ENCODE measurements at regions of chr1 and their contacts with region 1.

Region 1: DNA sequence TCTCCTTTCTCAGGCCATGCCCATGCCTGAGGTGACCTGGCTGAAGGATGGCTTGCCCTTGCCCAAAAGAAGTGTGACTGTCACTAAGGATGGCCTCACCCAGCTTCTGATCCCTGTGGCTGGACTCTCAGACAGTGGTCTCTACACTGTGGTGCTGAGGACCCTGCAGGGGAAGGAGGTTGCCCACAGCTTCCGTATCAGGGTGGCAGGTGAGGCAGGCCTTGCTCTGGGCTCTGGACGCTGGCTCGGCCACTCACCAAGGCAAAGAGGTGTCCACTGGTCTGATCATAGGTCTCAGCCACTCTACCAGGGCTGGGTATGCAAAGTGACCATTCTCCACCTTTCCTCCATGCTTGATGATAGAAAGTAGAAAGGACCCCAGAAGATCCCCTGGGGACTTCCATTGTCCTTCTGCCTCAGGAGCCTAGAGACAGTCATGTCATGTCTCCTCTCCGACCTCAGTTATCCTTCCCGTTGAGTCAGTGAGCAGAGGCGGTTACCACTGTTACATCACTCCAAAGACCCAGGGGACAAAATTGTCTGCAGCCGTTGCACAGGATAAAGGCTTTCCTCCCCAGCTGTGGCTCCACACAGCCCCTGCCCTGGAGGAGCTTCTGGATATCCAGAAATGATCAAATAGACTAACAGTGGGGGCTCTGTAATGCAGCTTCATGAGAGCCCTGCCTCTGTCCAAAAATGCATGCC is 34.2 kb downstream of the IGFN1 start:
- DNase-seq: no peak
- ATAC-seq: no peak
- H3K4me3 ChIP-seq: no peak overlapping the region
- H3K27ac ChIP-seq: no peak overlapping the region
- H3K4me1 ChIP-seq: peaks cover 30% of the 10 kb centered on the region
- H3K27me3 ChIP-seq: peaks cover 10 to 42% of the 10 kb centered on the region in 2 experiments
- CTCF ChIP-seq: no peak
- EP300 ChIP-seq: no peak
- POLR2A ChIP-seq: no peak
- RAD21 ChIP-seq: no peak

Region 2: DNA sequence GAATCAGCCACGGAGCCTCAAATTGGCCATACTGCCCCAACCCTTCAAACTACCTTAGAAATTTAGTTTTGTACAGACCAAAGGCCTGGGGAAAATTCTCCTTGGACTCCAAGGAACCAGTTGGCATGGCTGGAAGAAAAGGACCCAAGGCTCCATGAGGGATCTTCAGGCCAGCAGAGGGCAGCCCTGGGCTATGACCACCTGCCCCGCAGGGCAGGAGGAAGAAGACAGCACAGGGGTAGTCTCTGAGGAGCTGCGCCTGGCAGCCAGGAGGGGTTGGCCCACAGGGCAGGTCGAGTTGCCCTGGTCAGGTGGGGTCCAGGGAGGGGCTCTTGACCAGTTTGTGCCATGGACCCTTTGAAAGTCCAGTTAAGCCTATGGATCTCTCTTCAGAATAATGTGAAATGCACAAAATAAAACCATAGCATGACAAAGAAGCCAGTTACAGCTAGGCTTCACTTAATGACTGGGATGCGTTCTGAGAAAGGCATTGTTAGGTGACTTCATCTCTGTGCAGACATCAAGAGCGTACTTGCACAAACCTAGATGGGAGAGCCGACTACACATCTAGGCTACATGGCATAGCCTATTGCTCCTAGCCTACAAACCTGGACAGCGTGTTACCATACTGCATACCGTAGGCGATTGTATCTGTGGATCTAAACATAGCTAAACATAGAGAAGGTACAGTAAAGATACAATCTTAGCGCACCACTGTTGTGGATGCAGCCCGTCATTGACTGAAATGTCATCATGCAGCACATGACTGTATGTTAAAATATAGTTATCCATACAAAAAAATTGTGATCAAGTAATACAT is 138.7 kb before region 1 on chr1:
- CTCF ChIA-PET with region 1: interaction called, 5 read pairs
- POLR2A ChIA-PET with region 1: no interaction called
- in situ Hi-C with region 1: no loop called
- intact Hi-C with region 1: loop called (anchors 2 kb)
- DNase-seq: peak; percentile 36
- ATAC-seq: peak; percentile 97
- H3K4me3 ChIP-seq: no peak overlapping the region
- H3K27ac ChIP-seq: no peak overlapping the region
- H3K4me1 ChIP-seq: no peaks in the 10 kb centered on the region
- H3K27me3 ChIP-seq: peaks cover 5 to 31% of the 10 kb centered on the region in 2 experiments
- CTCF ChIP-seq: peak; percentile 74
- EP300 ChIP-seq: no peak
- POLR2A ChIP-seq: no peak
- RAD21 ChIP-seq: peak; percentile 49; the same call in 1 of the 2 replicates

Region 3: DNA sequence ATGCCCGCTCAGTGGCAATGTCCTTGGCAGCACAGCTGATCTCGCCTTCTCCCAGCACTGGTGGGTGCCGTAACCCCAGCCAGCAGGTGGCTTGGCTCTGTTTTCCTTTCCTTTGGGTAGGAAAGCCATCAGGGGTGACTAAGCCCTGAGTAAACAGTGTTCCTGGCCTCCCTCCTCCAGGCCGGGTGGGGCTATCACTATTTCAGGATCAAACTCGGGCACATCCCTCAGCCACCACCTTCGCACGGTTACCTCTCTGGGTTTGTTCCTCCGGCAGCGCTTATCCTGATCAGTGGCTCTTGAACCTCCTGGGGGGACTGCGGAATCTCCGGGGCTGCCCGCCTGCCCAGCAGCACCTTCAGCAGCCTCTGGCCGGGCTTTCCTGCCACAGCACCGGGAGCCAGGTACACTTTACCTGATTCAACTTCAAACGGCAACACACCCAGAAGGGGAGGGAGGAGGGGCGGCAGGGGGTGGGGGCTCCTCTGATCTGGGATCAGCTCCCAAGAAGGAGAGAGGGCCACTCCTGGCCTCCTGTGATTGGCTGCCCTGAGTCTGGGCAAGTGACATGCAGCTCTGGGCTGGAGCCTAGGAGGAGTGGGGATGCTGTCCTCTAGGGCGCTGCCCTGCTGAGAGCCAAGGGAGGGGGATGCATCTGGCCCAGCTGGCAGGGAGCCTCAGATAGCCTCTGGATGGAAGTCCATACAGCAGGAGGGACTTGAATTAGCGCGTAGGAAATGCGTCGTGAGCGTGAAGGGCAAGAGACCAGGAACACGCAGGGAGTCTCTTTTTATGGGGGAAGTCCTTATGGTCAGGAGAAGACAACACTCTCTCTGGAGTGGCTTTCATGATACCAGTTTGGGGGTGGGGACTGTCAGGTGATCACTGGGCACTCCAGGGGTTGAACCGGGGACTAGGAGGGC is 97.7 kb before region 1 on chr1 and contains the start of gene ASCL5:
- CTCF ChIA-PET with region 1: no interaction called
- POLR2A ChIA-PET with region 1: no interaction called
- in situ Hi-C with region 1: no loop called
- intact Hi-C with region 1: loop called (anchors 5 kb)
- DNase-seq: peak; percentile 72
- ATAC-seq: peak; percentile 91
- H3K4me3 ChIP-seq: peak within 1 kb of the TSS in 1 of 3 experiments; percentile 32; a peak in 1 of 6 replicates
- H3K27ac ChIP-seq: no peak within 1 kb of the TSS
- H3K4me1 ChIP-seq: peaks cover 11% of the 10 kb centered on the region
- H3K27me3 ChIP-seq: peaks cover 10 to 52% of the 10 kb centered on the region in 2 experiments
- CTCF ChIP-seq: peak; percentile 72
- EP300 ChIP-seq: no peak
- POLR2A ChIP-seq: no peak
- RAD21 ChIP-seq: peak; percentile 31; the same call in 1 of the 2 replicates
- total RNA-seq, gene ASCL5: not detected in 2 replicates

Region 4: DNA sequence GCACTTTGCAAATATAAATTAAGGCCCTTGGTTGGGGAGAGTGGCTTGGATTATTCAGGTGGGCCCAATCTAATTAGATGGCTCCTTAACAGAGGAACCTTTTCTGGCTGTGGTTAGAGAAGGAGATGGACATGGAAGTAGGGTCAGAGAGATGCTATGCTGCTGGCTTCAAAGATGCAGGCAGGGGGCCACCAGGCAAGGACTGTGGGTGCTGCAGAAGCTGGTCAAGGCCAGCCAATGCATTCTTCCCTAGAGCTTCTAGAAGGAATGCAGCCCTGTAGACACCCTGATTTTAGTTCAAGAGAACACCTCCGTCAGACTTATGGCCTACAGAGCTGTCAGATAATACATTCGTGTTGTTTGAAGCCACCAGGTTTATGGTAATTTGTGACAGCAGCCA is 66.9 kb before region 1 on chr1:
- CTCF ChIA-PET with region 1: no interaction called
- POLR2A ChIA-PET with region 1: no interaction called
- in situ Hi-C with region 1: no loop called
- intact Hi-C with region 1: no loop called
- DNase-seq: no peak
- ATAC-seq: no peak
- H3K4me3 ChIP-seq: no peak overlapping the region
- H3K27ac ChIP-seq: no peak overlapping the region
- H3K4me1 ChIP-seq: peaks cover 13% of the 10 kb centered on the region
- H3K27me3 ChIP-seq: no peaks in the 10 kb centered on the region; a peak in 1 of 5 replicates
- CTCF ChIP-seq: no peak
- EP300 ChIP-seq: no peak
- POLR2A ChIP-seq: no peak
- RAD21 ChIP-seq: no peak

Region 5: GRCh38 chr1:201170533-201171062 is 54.2 kb before region 1 on chr1:
- CTCF ChIA-PET with region 1: interaction called, 6 read pairs
- POLR2A ChIA-PET with region 1: no interaction called
- in situ Hi-C with region 1: no loop called
- intact Hi-C with region 1: loop called (anchors 1 kb)
- DNase-seq: peak; percentile 99
- ATAC-seq: peak; percentile 97
- H3K4me3 ChIP-seq: peak overlapping the region; percentile 51 to 76 (median 54)
- H3K27ac ChIP-seq: peak overlapping the region; percentile 96
- H3K4me1 ChIP-seq: peaks cover 60% of the 10 kb centered on the region
- H3K27me3 ChIP-seq: no peaks in the 10 kb centered on the region; a peak in 2 of 5 replicates
- CTCF ChIP-seq: no peak
- EP300 ChIP-seq: peak; percentile 32 to 90; a peak in 2 of 4 replicates
- POLR2A ChIP-seq: peak; percentile 84 to 92
- RAD21 ChIP-seq: no peak

Measured in HepG2 (cell line).